ENCODE measurements at regions of chr10 and their contacts with region 1.

Region 1: DNA sequence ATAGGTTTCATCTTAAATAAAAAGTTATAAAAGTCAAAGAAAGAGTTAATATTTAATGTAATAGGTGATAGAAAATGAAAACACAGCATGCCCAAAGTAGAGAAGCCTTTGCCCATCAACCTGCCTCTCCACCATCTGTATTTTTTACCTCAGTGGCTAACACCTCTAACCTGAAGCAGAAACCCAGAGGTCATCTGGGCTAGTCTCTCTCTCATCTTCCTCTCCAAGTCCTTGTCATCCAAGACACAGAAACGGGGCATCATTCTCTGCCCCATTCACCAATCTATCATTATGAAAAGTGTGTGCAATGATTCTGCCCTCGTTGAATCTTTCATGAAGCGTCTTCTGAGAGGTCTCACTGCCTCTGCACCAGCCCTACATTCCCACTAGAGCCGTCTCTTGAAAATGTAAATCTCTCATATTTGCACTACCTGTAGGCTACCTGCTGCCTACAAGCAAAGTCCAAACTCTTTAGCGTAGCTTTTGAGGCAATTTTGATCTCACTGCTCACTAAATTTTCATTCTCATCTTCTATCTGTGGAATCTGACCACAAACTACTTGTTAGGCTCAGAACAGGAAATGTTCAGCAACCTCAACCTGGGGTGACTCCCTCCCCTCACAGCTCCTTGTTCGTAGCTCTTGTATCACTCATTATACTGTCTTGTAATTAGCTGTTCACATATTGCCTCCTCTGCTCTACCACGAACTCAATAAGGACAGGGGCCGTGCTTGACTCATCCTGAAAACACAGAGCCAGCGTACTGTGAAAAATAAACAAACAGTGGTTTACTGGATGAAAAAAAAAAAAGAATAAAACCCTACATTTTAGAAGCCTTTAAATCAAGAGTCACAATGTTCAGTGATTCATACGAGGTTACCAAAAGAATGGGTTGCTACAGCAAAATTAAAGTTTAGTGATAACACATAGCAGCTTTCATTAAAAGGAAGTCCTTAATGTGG is 83.1 kb downstream of the CTNNA3 start:
- DNase-seq: peak; percentile 77 to 89 (median 81)
- H3K4me3 ChIP-seq: peak overlapping the region in 1 of 2 donors; percentile 39
- H3K4me3 Mint-ChIP-seq: peak overlapping the region; percentile 39 to 87 (median 76)
- H3K27ac ChIP-seq: peak overlapping the region; percentile 13
- H3K27ac Mint-ChIP-seq: peak overlapping the region; percentile 69 to 89 (median 78)
- H3K4me1 ChIP-seq: peaks cover 25% of the 10 kb centered on the region
- H3K4me1 Mint-ChIP-seq: peaks cover 18 to 33% (median 24%) of the 10 kb centered on the region in 4 donors
- H3K27me3 ChIP-seq: no peaks in the 10 kb centered on the region
- H3K27me3 Mint-ChIP-seq: peaks cover 0 to 2% of the 10 kb centered on the region in 2 donors

Region 2: GRCh38 chr10:67596641-67597040 is 16.2 kb before region 1 on chr10:
- CTCF ChIA-PET with region 1: no interaction called
- POLR2A ChIA-PET with region 1: no interaction called
- intact Hi-C with region 1: no loop called
- DNase-seq: no peak
- H3K4me3 ChIP-seq: no peak overlapping the region
- H3K4me3 Mint-ChIP-seq: no peak overlapping the region
- H3K27ac ChIP-seq: no peak overlapping the region
- H3K27ac Mint-ChIP-seq: no peak overlapping the region
- H3K4me1 ChIP-seq: no peaks in the 10 kb centered on the region
- H3K4me1 Mint-ChIP-seq: no peaks in the 10 kb centered on the region
- H3K27me3 ChIP-seq: no peaks in the 10 kb centered on the region
- H3K27me3 Mint-ChIP-seq: peaks cover 2 to 12% of the 10 kb centered on the region in 2 donors

Region 3: DNA sequence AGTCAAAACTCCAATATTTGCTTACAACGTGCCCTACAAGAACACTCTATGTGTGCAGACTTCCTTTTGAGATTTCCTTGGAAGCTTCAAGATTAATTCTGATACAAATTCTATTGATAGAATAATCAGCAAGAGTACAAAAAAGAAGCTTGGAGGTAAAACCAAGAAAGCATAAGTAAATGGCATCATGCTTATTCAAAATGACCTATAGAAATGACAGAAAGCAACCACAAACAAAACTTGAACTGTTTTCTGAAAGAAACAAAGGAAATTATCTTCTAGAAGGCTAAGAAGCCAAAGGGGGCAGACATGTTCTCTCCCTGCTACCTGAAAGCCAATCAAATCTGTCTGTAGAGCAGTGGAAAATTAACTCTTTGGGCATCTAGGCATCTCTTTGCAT is 10.1 kb after region 1 on chr10:
- CTCF ChIA-PET with region 1: no interaction called
- POLR2A ChIA-PET with region 1: no interaction called
- intact Hi-C with region 1: no loop called
- DNase-seq: no peak
- H3K4me3 ChIP-seq: no peak overlapping the region
- H3K4me3 Mint-ChIP-seq: no peak overlapping the region
- H3K27ac ChIP-seq: no peak overlapping the region
- H3K27ac Mint-ChIP-seq: no peak overlapping the region
- H3K4me1 ChIP-seq: no peaks in the 10 kb centered on the region
- H3K4me1 Mint-ChIP-seq: peaks cover 0 to 5% (median 2%) of the 10 kb centered on the region in 4 donors
- H3K27me3 ChIP-seq: no peaks in the 10 kb centered on the region
- H3K27me3 Mint-ChIP-seq: peaks cover 6% of the 10 kb centered on the region in 2 donors

Region 4: DNA sequence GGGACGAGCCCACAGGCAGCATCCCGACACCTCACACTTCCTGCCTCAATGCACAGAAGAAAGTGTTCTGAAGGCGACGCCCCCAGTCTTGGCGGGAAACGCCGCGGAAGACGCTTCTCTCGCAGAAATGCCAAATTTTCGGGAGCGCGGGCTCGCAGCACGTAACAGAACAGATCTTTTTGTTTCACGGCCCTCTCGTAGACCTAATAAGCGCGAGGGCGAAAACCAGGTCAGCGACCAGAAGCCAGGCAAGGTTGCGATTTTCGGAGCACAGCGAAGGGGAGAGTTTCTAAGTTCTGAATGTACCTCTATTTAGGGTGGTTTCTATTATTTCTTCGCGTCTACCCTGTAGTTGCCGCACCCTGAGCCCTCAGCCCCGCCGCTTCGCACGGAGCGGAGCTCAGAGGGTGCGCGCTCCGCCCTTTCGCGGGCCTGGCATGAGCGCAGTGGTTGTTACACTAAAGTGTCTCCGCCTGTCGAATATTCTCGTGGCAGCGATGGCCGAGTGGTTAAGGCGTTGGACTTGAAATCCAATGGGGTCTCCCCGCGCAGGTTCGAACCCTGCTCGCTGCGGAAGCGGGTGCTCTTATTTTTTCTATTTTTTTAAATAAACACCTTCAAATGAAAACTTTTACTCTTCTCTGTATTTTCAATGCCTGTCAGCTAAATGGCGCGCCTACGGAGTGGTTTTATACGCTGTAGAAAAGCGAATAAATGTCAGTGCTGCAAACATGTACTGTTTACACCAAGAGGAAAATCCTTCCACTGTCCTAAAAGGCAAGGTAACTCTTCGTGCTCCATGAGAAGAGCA is 151.4 kb after region 1 on chr10:
- CTCF ChIA-PET with region 1: no interaction called
- POLR2A ChIA-PET with region 1: interaction called, 13 read pairs
- intact Hi-C with region 1: loop called (anchors 1 kb)
- DNase-seq: peak; percentile 96 to 99 (median 97)
- H3K4me3 ChIP-seq: peak overlapping the region; percentile 58 to 98
- H3K4me3 Mint-ChIP-seq: peak overlapping the region; percentile 90 to 98 (median 95)
- H3K27ac ChIP-seq: peak overlapping the region; percentile 73
- H3K27ac Mint-ChIP-seq: peak overlapping the region; percentile 98 to 100 (median 99)
- H3K4me1 ChIP-seq: peaks cover 14% of the 10 kb centered on the region
- H3K4me1 Mint-ChIP-seq: peaks cover 9 to 28% (median 14%) of the 10 kb centered on the region in 4 donors
- H3K27me3 ChIP-seq: no peaks in the 10 kb centered on the region
- H3K27me3 Mint-ChIP-seq: peaks cover 4 to 9% of the 10 kb centered on the region in 2 donors